PC-3 (cell line): ENCODE measurements at regions of chr5 and their contacts with region 1.

Region 1: DNA sequence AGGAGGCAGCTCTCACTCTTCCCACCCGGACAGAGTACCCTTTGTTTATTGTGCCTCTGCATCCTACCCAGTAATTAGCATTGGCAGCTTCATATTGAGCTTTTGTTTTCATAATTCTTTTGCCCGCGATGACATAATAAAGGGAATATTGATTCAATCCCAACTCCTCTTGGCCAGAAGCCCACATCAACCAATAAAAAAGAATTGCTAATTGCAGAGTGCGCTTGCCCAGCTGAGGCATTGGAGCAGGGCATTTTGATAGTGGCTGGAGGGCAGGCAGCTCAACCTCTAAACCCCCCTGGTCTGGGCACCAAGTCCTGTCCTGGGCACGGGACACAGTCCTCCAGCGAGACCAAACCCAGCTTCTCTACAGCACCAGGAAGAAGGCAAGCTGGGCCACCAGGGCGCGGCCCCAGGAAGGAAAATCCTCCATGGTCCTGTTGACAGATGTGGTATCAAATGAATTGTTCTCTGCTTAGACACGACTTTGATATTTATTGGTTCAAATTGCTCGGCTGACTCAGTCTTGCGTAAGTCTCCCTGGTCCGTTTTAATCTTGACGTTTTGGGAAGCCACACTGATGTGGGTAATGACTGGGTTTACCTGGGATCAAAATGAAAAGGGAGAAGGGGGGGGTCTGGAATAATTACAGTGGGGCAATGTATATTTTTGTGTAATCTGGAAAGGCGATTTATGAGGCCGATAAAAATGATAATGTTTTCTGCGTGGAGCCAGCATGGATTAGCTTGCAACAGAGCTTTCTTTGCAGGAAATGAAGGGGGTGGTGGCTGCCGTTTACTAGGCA is 220.7 kb upstream of the MSX2 start:
- DNase-seq: peak; percentile 92
- ATAC-seq: peak; percentile 82
- H3K4me3 ChIP-seq: peak overlapping the region; percentile 50
- H3K27ac ChIP-seq: peak overlapping the region; percentile 98
- H3K4me1 ChIP-seq: peaks cover 33% of the 10 kb centered on the region
- H3K27me3 ChIP-seq: no peaks in the 10 kb centered on the region
- CTCF ChIP-seq: no peak

Region 2: GRCh38 chr5:174532455-174533453 is 29.1 kb after region 1 on chr5:
- CTCF ChIA-PET with region 1: no interaction called
- POLR2A ChIA-PET with region 1: no interaction called
- intact Hi-C with region 1: loop called (anchors 1 kb)
- DNase-seq: peak; percentile 92
- ATAC-seq: peak; percentile 71
- H3K4me3 ChIP-seq: peak overlapping the region; percentile 61
- H3K27ac ChIP-seq: peak overlapping the region; percentile 99
- H3K4me1 ChIP-seq: peaks cover 66% of the 10 kb centered on the region
- H3K27me3 ChIP-seq: no peaks in the 10 kb centered on the region
- CTCF ChIP-seq: no peak

Region 3: GRCh38 chr5:174599992-174600391 is 96.3 kb after region 1 on chr5:
- CTCF ChIA-PET with region 1: no interaction called
- POLR2A ChIA-PET with region 1: no interaction called
- intact Hi-C with region 1: no loop called
- DNase-seq: no peak
- ATAC-seq: no peak
- H3K4me3 ChIP-seq: no peak overlapping the region
- H3K27ac ChIP-seq: no peak overlapping the region
- H3K4me1 ChIP-seq: no peaks in the 10 kb centered on the region
- H3K27me3 ChIP-seq: peaks cover 12% of the 10 kb centered on the region; the same call in 1 of the 2 replicates
- CTCF ChIP-seq: no peak

Region 4: DNA sequence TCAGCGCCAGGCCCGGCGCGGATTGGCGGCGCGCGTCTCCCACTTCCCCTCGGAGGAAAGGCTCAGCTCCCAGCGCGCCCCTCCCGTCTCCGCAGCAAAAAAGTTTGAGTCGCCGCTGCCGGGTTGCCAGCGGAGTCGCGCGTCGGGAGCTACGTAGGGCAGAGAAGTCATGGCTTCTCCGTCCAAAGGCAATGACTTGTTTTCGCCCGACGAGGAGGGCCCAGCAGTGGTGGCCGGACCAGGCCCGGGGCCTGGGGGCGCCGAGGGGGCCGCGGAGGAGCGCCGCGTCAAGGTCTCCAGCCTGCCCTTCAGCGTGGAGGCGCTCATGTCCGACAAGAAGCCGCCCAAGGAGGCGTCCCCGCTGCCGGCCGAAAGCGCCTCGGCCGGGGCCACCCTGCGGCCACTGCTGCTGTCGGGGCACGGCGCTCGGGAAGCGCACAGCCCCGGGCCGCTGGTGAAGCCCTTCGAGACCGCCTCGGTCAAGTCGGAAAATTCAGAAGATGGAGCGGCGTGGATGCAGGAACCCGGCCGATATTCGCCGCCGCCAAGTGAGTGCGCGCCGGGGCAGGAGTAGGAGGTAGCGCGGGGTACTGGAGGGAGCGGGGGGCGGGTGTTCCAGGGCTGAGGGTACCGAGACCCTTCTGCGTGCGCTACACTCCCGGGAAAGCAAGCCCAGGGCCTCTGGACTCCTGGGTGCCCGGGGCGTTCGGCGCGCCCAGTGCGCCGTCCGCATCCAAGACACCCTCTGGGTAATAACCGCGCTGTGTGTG is 221.0 kb after region 1 on chr5 and contains the start of gene MSX2:
- CTCF ChIA-PET with region 1: no interaction called
- POLR2A ChIA-PET with region 1: interaction called, 34 read pairs
- intact Hi-C with region 1: no loop called
- DNase-seq: peak; percentile 77
- ATAC-seq: peak; percentile 96
- H3K4me3 ChIP-seq: peak within 1 kb of the TSS; percentile 81
- H3K27ac ChIP-seq: no peak within 1 kb of the TSS
- H3K4me1 ChIP-seq: no peaks in the 10 kb centered on the region
- H3K27me3 ChIP-seq: peaks cover 29% of the 10 kb centered on the region
- CTCF ChIP-seq: no peak
- total RNA-seq, gene MSX2: 4.1 and 4.9 TPM in 2 replicates